Activated CD8-positive, alpha-beta memory T cell treated with anti-CD3 and anti-CD28 coated beads, Interleukin-2, amount 10 ng/mL, durations not matched to agents 7 days and 5 days (primary cell): ENCODE measurements at regions of chr14 and their contacts with region 1.

Region 1: GRCh38 chr14:99230208-99231151 is 41.5 kb downstream of the BCL11B start:
- DNase-seq: peak; percentile 97
- ATAC-seq: peak; percentile 61
- H3K4me3 Mint-ChIP-seq: peak overlapping the region; percentile 73
- H3K27ac Mint-ChIP-seq: peak overlapping the region; percentile 91
- H3K4me1 Mint-ChIP-seq: peaks cover 91% of the 10 kb centered on the region
- H3K27me3 Mint-ChIP-seq: no peaks in the 10 kb centered on the region

Region 2: DNA sequence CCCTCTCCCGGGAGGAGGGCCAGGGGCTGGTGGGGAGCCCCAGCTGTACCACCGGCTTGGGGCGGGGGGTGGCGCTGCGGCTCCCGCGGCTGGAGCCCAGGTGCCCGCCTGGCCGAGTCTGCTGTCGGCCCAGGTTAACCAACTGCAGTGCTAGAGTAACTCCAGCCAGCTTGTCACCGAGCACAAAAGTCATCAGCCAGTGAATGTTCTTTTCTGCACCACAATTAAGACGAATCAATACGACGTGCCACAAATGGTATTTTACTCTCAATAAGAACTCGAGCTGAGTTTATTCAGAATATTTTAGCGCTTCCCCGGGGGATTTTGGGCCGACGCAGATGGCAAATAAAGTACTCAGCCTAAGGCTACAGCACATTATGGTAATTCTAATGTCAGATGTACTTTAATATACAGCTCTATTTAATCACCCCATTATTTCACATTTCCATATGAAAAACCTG is 41.7 kb before region 1 on chr14:
- CTCF ChIA-PET with region 1: interaction called, 17 read pairs
- DNase-seq: peak; percentile 71
- ATAC-seq: peak; percentile 38
- H3K4me3 Mint-ChIP-seq: peak overlapping the region; percentile 71
- H3K27ac Mint-ChIP-seq: peak overlapping the region; percentile 94
- H3K4me1 Mint-ChIP-seq: peaks cover 88% of the 10 kb centered on the region
- H3K27me3 Mint-ChIP-seq: no peaks in the 10 kb centered on the region

Region 3: GRCh38 chr14:99215277-99215676 is 15.2 kb before region 1 on chr14:
- CTCF ChIA-PET with region 1: interaction called, 16 read pairs
- DNase-seq: no peak
- ATAC-seq: no peak
- H3K4me3 Mint-ChIP-seq: peak overlapping the region; percentile 3
- H3K27ac Mint-ChIP-seq: peak overlapping the region; percentile 47
- H3K4me1 Mint-ChIP-seq: peaks cover 90% of the 10 kb centered on the region
- H3K27me3 Mint-ChIP-seq: no peaks in the 10 kb centered on the region

Region 4: GRCh38 chr14:99245564-99246511 is 15.4 kb after region 1 on chr14:
- CTCF ChIA-PET with region 1: interaction called, 56 read pairs
- DNase-seq: no peak
- ATAC-seq: no peak
- H3K4me3 Mint-ChIP-seq: peak overlapping the region; percentile 73
- H3K27ac Mint-ChIP-seq: peak overlapping the region; percentile 91
- H3K4me1 Mint-ChIP-seq: peaks cover 82% of the 10 kb centered on the region
- H3K27me3 Mint-ChIP-seq: no peaks in the 10 kb centered on the region

Region 5: GRCh38 chr14:99252940-99253868 is 22.7 kb after region 1 on chr14:
- CTCF ChIA-PET with region 1: interaction called, 45 read pairs
- DNase-seq: peak; percentile 78
- ATAC-seq: peak; percentile 33
- H3K4me3 Mint-ChIP-seq: peak overlapping the region; percentile 67
- H3K27ac Mint-ChIP-seq: peak overlapping the region; percentile 96
- H3K4me1 Mint-ChIP-seq: peaks cover 95% of the 10 kb centered on the region
- H3K27me3 Mint-ChIP-seq: no peaks in the 10 kb centered on the region

Region 6: DNA sequence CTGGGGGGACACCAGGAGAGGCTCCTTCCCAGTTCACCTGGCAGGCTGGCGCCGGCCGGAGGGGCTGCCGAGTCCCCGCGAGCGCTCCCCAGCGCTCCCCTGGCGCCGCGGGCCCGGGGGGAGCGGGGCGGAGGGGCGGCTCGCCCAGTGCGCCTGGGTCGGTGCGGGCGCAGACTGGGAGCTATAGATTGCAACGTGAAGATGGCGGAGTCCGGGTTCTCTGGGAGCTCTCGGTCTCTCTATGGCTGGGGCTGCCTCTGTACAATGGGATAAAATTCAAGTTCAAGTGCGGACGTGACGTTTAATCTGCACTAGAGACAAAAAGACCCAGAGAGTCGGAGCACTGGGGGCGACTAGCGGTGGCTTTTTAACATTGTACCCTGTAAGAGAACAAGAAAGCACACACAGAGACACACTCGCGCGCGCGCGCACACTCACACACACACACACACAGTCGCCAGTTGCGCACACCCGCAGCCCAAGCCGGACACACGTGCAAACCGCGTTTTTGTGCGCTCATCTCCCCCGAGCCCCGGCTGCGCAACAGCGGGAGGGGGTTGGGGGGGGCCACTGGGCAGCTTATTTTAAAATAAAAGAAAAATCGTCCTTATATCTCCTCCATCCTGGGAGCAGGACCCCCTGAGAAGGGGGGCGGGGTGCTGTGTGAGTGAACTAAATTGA is 41.6 kb after region 1 on chr14 and contains the start of gene BCL11B:
- CTCF ChIA-PET with region 1: interaction called, 395 read pairs
- DNase-seq: peak; percentile 96
- ATAC-seq: peak; percentile 71
- H3K4me3 Mint-ChIP-seq: peak within 1 kb of the TSS; percentile 96
- H3K27ac Mint-ChIP-seq: peak within 1 kb of the TSS; percentile 99
- H3K4me1 Mint-ChIP-seq: peaks cover 26% of the 10 kb centered on the region
- H3K27me3 Mint-ChIP-seq: peaks cover 13% of the 10 kb centered on the region
- total RNA-seq, gene BCL11B: 53.0 to 66.2 TPM